Heart left ventricle (tissue), 16 donors: ENCODE measurements at regions of chr13 and their contacts with region 1.

Region 1: DNA sequence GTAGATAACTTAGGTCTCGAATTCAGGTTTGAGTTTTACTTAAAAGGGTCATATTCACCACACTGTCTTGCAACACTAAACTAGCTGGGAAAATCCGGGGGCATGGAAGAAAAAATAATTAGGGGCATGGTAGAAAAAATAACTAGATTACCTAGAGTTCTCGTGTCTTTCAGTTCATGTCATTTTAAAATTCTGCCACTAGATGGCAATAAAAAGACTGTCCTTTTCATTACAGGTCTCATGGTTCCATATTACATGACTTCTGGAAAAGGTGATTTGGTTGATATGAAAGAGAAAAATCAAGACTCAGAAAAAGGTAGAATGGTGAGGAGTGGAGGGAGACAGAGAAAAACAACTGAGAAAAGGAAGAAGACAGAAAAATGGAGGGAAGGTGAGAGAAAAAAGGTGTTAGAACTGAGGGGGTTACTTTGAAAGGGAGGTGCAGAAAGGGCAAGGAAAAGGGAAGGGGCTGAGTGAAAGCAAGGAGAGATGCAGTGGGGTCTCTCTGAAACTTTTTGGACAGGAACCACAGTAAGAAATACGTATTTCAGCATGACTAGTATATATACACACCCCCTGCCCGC is 299.0 kb downstream of the KLF12 start:
- DNase-seq: no peak
- ATAC-seq: peak in 2 of 4 donors; percentile 48 to 69
- H3K4me3 ChIP-seq: no peak overlapping the region
- H3K27ac ChIP-seq: no peak overlapping the region
- H3K4me1 ChIP-seq: peaks cover 0 to 28% (median 4%) of the 10 kb centered on the region in 12 donors
- H3K27me3 ChIP-seq: no peaks in the 10 kb centered on the region
- CTCF ChIP-seq: peak; percentile 56 to 78 (median 70)
- POLR2A ChIP-seq: no peak

Region 2: GRCh38 chr13:73938375-73939070 is 103.3 kb after region 1 on chr13:
- intact Hi-C with region 1: loop called in 1 of 10 experiments (anchors 10 kb)
- DNase-seq: no peak
- ATAC-seq: peak in 1 of 4 donors; percentile 44
- H3K4me3 ChIP-seq: no peak overlapping the region
- H3K27ac ChIP-seq: no peak overlapping the region
- H3K4me1 ChIP-seq: peaks cover 0 to 42% (median 15%) of the 10 kb centered on the region in 12 donors
- H3K27me3 ChIP-seq: no peaks in the 10 kb centered on the region
- CTCF ChIP-seq: no peak
- POLR2A ChIP-seq: no peak

Region 3: GRCh38 chr13:74145249-74145975 is 310.2 kb after region 1 on chr13:
- intact Hi-C with region 1: loop called in 1 of 10 experiments (anchors 10 kb)
- DNase-seq: no peak
- ATAC-seq: peak in 2 of 4 donors; percentile 47 to 60
- H3K4me3 ChIP-seq: no peak overlapping the region
- H3K27ac ChIP-seq: no peak overlapping the region
- H3K4me1 ChIP-seq: peaks cover 0 to 16% (median 8%) of the 10 kb centered on the region in 12 donors
- H3K27me3 ChIP-seq: no peaks in the 10 kb centered on the region
- CTCF ChIP-seq: no peak
- POLR2A ChIP-seq: no peak